ENCODE measurements at regions of chr17 and their contacts with region 1.

Region 1: GRCh38 chr17:55527540-55528118 is 16.4 kb upstream of the SMIM36 start:
- DNase-seq: peak in 1 of 5 donors; percentile 14
- ATAC-seq: peak in 3 of 4 donors; percentile 59 to 84 (median 82)
- H3K4me3 ChIP-seq: no peak overlapping the region
- H3K27ac ChIP-seq: no peak overlapping the region
- H3K4me1 ChIP-seq: no peaks in the 10 kb centered on the region
- H3K27me3 ChIP-seq: peaks cover 0 to 3% (median 0%) of the 10 kb centered on the region in 9 donors
- CTCF ChIP-seq: peak; percentile 18 to 64 (median 57)
- POLR2A ChIP-seq: no peak

Region 2: GRCh38 chr17:55635253-55635914 is 107.8 kb after region 1 on chr17:
- intact Hi-C with region 1: loop called in 7 of 10 experiments (anchors 2 to 5 kb)
- DNase-seq: peak in 2 of 5 donors; percentile 18 to 39
- ATAC-seq: peak; percentile 71 to 91 (median 80)
- H3K4me3 ChIP-seq: peak overlapping the region in 5 of 12 donors; percentile 4 to 26 (median 15)
- H3K27ac ChIP-seq: peak overlapping the region in 6 of 12 donors; percentile 1 to 36 (median 17)
- H3K4me1 ChIP-seq: peaks cover 0 to 20% (median 7%) of the 10 kb centered on the region in 12 donors
- H3K27me3 ChIP-seq: peaks cover 0 to 20% (median 0%) of the 10 kb centered on the region in 9 donors
- CTCF ChIP-seq: no peak
- POLR2A ChIP-seq: no peak

Region 3: GRCh38 chr17:55717898-55718735 is 190.5 kb after region 1 on chr17:
- intact Hi-C with region 1: loop called (anchors 1 to 5 kb)
- DNase-seq: peak; percentile 63 to 83 (median 68)
- ATAC-seq: peak in 2 of 4 donors; percentile 50 to 52
- H3K4me3 ChIP-seq: no peak overlapping the region
- H3K27ac ChIP-seq: no peak overlapping the region
- H3K4me1 ChIP-seq: peaks cover 0 to 12% (median 4%) of the 10 kb centered on the region in 12 donors
- H3K27me3 ChIP-seq: no peaks in the 10 kb centered on the region
- CTCF ChIP-seq: peak; percentile 70 to 90 (median 82)
- POLR2A ChIP-seq: no peak

Region 4: GRCh38 chr17:55743103-55743679 is 215.6 kb after region 1 on chr17:
- intact Hi-C with region 1: no loop called
- DNase-seq: peak in 1 of 5 donors; percentile 21
- ATAC-seq: no peak
- H3K4me3 ChIP-seq: no peak overlapping the region
- H3K27ac ChIP-seq: no peak overlapping the region
- H3K4me1 ChIP-seq: no peaks in the 10 kb centered on the region
- H3K27me3 ChIP-seq: no peaks in the 10 kb centered on the region
- CTCF ChIP-seq: no peak
- POLR2A ChIP-seq: no peak

Region 5: GRCh38 chr17:55825213-55825612 is 297.6 kb after region 1 on chr17:
- intact Hi-C with region 1: loop called (anchors 1 to 5 kb)
- DNase-seq: no peak
- ATAC-seq: no peak
- H3K4me3 ChIP-seq: no peak overlapping the region
- H3K27ac ChIP-seq: no peak overlapping the region
- H3K4me1 ChIP-seq: no peaks in the 10 kb centered on the region
- H3K27me3 ChIP-seq: no peaks in the 10 kb centered on the region
- CTCF ChIP-seq: peak in 9 of 12 donors; percentile 8 to 50 (median 39)
- POLR2A ChIP-seq: no peak

Region 6: GRCh38 chr17:56715613-56716357 is 1188.2 kb after region 1 on chr17:
- intact Hi-C with region 1: loop called in 4 of 10 experiments (anchors 5 to 10 kb)
- DNase-seq: peak; percentile 72 to 77 (median 74)
- ATAC-seq: peak; percentile 80 to 94 (median 88)
- H3K4me3 ChIP-seq: no peak overlapping the region
- H3K27ac ChIP-seq: no peak overlapping the region
- H3K4me1 ChIP-seq: no peaks in the 10 kb centered on the region
- H3K27me3 ChIP-seq: peaks cover 0 to 14% (median 0%) of the 10 kb centered on the region in 9 donors
- CTCF ChIP-seq: peak; percentile 71 to 92 (median 83)
- POLR2A ChIP-seq: no peak